OCI-LY7 (cell line): ENCODE measurements at regions of chr12 and their contacts with region 1.

Region 1: DNA sequence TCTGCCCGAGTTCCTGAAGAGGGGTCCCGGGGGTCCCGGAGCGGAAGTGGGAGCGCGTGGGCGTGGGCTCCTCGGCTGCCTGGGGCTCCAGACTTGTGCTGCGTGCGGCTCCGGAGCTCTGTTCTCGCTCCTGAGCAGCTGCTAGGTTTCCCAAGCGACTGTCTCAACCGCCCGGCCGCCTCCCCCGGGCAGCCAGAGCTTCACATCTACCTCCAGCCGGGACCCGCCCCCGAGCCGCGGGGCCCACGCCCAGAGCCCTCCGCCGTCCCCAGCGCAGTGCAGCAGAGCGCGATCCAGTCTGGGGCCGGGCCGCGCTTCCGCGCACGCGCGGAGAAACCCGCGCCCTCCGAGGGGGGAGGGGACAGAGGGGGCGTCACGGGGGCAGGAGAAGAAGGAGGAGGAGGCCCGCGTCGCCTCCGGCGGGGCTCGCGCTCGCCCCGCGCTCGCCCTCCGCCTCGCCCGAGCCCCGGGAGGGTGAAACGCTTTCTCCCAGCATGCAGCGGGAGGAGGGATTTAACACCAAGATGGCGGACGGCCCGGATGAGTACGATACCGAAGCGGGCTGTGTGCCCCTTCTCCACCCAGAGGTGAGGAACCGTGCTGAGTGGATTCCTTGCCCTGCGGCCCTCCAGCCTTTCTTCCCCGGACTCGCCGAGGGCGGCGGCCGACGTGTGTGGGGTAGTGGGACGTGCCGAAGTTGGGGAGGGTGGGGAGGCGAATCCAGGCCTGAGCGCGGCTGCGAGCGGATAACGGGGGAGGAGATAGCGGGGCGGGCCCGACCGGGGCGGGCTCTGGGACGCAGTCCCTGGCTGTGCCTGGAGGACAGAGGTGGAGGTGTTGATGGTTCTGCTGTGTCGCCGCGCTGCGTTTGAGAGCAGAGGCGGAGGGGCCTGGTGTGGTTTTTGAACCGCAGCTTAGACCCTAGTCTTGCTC is at the start of gene ZDHHC17:
- DNase-seq: peak; percentile 91
- H3K4me3 ChIP-seq: peak within 1 kb of the TSS; percentile 94
- H3K27ac ChIP-seq: peak within 1 kb of the TSS; percentile 77
- H3K4me1 ChIP-seq: peaks cover 17% of the 10 kb centered on the region
- CTCF ChIP-seq: no peak
- total RNA-seq, gene ZDHHC17: 24.0 and 27.4 TPM in 2 replicates

Region 2: DNA sequence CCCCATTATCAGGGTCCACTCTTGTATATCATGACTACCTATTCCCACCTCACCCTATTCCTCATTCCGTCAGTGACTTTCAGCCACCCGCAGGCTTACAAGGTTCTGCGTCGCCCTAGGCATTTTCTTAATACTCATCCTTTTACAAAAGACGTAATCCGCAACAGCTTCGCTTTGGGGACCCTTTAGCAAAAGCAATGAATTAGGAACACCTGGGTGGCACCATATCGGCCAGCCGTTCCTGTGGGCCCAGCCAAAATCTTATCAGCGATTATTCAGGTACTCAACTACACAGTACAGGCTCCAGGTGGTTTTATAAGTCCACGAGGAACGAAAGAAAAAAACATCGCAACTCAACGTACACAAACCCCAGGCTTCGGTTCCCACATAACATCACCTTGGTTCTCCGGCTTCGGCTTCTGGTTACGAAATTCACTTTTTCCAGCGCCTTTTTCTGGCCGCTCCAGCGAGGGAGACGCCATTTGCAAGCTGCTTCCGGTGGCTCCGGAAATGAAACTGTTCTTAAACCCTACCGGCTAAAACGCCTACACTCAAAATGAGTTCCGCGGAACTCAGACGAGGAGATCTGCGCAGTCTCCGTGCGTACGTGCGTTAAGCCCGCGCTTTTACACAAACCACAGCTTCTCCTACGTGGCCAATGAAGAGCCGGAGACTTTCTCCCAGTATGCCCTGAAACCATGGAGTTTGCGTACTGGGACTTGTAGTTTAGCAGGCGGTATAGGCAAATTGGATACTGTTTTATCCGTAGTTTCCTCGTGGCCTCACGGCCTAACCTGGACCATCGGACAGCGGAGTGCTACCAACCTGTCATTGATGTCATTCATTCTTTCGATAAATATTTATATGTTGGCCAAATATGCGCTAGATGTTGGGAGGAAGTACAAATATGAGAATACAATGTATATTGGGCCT is 1252.6 kb before region 1 on chr12 and contains the start of gene KRR1:
- CTCF ChIA-PET with region 1: no interaction called
- POLR2A ChIA-PET with region 1: no interaction called
- intact Hi-C with region 1: loop called (anchors 10 kb)
- DNase-seq: peak; percentile 96
- H3K4me3 ChIP-seq: peak within 1 kb of the TSS; percentile 97
- H3K27ac ChIP-seq: peak within 1 kb of the TSS; percentile 62
- H3K4me1 ChIP-seq: peaks cover 22% of the 10 kb centered on the region
- CTCF ChIP-seq: no peak
- total RNA-seq, gene KRR1: 27.6 and 44.0 TPM in 2 replicates

Region 3: GRCh38 chr12:76299536-76300296 is 464.3 kb before region 1 on chr12:
- CTCF ChIA-PET with region 1: no interaction called
- POLR2A ChIA-PET with region 1: no interaction called
- intact Hi-C with region 1: no loop called
- DNase-seq: no peak
- H3K4me3 ChIP-seq: no peak overlapping the region
- H3K27ac ChIP-seq: no peak overlapping the region
- H3K4me1 ChIP-seq: no peaks in the 10 kb centered on the region
- CTCF ChIP-seq: no peak

Region 4: GRCh38 chr12:76559400-76560085 is 204.5 kb before region 1 on chr12 and contains the start of gene OSBPL8:
- CTCF ChIA-PET with region 1: no interaction called
- POLR2A ChIA-PET with region 1: interaction called, 5 read pairs
- intact Hi-C with region 1: loop called (anchors 5 kb)
- DNase-seq: peak; percentile 93
- H3K4me3 ChIP-seq: peak within 1 kb of the TSS; percentile 100
- H3K27ac ChIP-seq: peak within 1 kb of the TSS; percentile 66
- H3K4me1 ChIP-seq: peaks cover 40% of the 10 kb centered on the region
- CTCF ChIP-seq: peak; percentile 38; the same call in 1 of the 2 replicates
- total RNA-seq, gene OSBPL8: 25.0 and 34.0 TPM in 2 replicates

Region 5: DNA sequence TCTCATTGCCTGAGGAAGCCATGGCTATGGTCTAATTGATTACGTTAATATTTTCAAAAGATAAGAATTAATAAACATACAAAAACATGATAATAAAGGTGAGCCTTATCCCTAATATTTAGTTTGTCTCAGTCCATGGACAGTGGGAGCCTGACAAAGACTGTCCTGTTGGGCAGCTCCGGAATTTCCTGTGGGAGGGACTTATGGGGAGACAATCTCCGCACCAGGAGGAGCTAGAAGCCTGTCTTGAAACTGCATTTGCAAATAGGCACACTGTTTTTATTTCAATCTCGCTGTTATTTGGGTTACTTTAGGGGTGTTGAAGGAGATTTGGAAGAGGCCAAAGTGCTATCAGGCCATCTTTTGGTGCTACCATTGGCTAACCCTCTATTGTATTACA is 50.9 kb before region 1 on chr12:
- CTCF ChIA-PET with region 1: no interaction called
- POLR2A ChIA-PET with region 1: no interaction called
- intact Hi-C with region 1: no loop called
- DNase-seq: no peak
- H3K4me3 ChIP-seq: no peak overlapping the region
- H3K27ac ChIP-seq: no peak overlapping the region
- H3K4me1 ChIP-seq: no peaks in the 10 kb centered on the region
- CTCF ChIP-seq: no peak

Region 6: DNA sequence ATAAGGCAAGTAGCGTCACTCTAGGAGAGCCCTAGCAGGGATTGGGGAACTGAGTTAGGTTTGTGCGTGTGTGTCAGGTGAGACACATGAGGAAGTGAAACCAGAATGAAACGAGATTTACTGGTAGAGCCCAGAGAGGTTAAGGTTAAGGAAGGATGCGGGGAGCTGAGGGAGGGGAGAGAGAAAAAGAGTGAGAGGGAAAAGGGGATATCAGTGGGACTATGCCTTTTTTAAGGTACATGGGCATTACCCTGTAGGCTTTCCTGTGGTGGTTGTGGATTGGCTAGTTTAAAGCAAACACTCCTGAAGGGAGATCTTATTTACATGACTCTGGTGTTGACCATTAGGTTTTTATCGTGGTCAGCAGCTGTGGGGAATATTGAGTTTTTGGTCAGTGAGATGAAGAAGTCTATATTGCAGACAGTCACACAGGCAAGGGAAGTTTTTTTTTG is 13.8 kb after region 1 on chr12:
- CTCF ChIA-PET with region 1: interaction called, 3 read pairs
- POLR2A ChIA-PET with region 1: interaction called, 18 read pairs
- intact Hi-C with region 1: no loop called
- DNase-seq: peak; percentile 87
- H3K4me3 ChIP-seq: peak overlapping the region; percentile 12
- H3K27ac ChIP-seq: peak overlapping the region; percentile 42
- H3K4me1 ChIP-seq: peaks cover 24% of the 10 kb centered on the region
- CTCF ChIP-seq: no peak

Region 7: GRCh38 chr12:77064896-77065360 is 300.9 kb after region 1 on chr12:
- CTCF ChIA-PET with region 1: no interaction called
- POLR2A ChIA-PET with region 1: no interaction called
- intact Hi-C with region 1: loop called (anchors 5 kb)
- DNase-seq: peak; percentile 42
- H3K4me3 ChIP-seq: peak overlapping the region; percentile 95
- H3K27ac ChIP-seq: peak overlapping the region; percentile 51
- H3K4me1 ChIP-seq: peaks cover 38% of the 10 kb centered on the region
- CTCF ChIP-seq: no peak